CD14-positive monocyte (primary cell): ENCODE measurements at regions of chr10 and their contacts with region 1.

Region 1: DNA sequence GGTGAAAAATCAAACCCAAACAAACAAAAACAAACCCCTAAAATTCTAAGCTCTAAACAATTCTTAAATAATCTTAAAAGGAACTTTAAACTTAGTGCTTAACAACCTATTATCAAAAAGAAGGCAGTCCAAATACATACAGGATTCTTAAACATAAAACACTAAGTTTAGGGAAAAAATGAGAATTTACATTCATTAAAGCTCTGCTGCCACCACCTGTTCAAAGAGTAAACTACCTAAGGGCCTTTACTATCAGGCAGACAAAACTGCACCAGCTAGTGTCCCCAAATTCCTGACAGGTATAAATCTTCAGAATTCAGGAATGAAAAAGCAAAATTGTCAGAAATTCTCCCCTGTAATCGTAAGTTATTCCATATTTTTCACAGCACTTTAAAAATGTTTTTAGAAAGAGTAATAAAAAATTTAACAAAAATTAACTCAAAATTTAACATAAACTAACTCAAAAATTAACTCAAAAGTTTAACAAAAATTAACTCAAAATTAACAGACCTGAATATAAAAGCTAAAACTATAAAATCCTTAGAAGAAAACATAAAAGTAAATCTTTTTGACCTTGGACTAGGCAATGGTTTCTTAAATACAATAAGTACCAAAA is 55.1 kb downstream of the PDZD8 start:
- DNase-seq: peak in 2 of 3 donors; percentile 9 to 18
- H3K4me3 ChIP-seq: no peak overlapping the region
- H3K4me3 Mint-ChIP-seq: no peak overlapping the region
- H3K27ac ChIP-seq: no peak overlapping the region
- H3K27ac Mint-ChIP-seq: no peak overlapping the region
- H3K4me1 ChIP-seq: no peaks in the 10 kb centered on the region
- H3K4me1 Mint-ChIP-seq: peaks cover 3% of the 10 kb centered on the region
- H3K27me3 ChIP-seq: no peaks in the 10 kb centered on the region
- H3K27me3 Mint-ChIP-seq: no peaks in the 10 kb centered on the region
- CTCF ChIP-seq: peak; percentile 70

Region 2: DNA sequence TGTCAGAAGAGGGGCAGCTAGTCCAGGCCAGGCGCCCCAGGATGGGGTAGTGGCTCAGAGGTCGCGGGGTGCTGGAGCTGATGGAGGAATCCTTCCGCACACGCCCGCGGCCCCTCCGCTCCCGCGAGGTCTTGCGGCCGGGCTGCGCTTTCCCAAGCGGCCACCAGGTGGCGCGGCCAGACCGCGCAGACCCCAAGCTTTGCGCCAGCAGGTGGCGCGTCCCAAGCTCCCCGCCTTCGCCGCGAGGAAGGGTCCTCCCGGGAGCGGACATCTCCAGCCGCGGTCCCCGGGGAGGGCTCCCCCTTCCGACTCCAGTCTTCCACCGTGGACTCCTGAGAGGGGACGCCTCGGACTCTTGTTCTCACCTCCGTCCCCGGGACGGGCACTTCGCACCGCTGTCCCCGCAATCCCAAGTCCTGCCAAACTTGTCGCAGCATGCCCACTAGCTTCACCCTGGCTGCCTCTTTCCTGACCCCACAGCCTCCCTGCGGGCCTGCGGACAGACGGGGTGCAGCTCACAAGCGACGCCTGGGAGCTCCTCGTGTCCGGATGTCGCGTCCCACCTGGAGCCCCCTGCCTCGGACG is 103.5 kb before region 1 on chr10:
- intact Hi-C with region 1: loop called (anchors 5 to 10 kb)
- DNase-seq: peak; percentile 54 to 71 (median 63)
- H3K4me3 ChIP-seq: peak overlapping the region; percentile 32 to 74 (median 50)
- H3K4me3 Mint-ChIP-seq: peak overlapping the region; percentile 78 to 91
- H3K27ac ChIP-seq: no peak overlapping the region
- H3K27ac Mint-ChIP-seq: peak overlapping the region in 2 of 7 donors; percentile 6 to 52
- H3K4me1 ChIP-seq: peaks cover 12 to 14% of the 10 kb centered on the region in 2 donors
- H3K4me1 Mint-ChIP-seq: peaks cover 15% of the 10 kb centered on the region
- H3K27me3 ChIP-seq: peaks cover 0 to 43% of the 10 kb centered on the region in 2 donors
- H3K27me3 Mint-ChIP-seq: peaks cover 37 to 74% (median 59%) of the 10 kb centered on the region in 3 donors
- CTCF ChIP-seq: peak; percentile 100

Region 3: DNA sequence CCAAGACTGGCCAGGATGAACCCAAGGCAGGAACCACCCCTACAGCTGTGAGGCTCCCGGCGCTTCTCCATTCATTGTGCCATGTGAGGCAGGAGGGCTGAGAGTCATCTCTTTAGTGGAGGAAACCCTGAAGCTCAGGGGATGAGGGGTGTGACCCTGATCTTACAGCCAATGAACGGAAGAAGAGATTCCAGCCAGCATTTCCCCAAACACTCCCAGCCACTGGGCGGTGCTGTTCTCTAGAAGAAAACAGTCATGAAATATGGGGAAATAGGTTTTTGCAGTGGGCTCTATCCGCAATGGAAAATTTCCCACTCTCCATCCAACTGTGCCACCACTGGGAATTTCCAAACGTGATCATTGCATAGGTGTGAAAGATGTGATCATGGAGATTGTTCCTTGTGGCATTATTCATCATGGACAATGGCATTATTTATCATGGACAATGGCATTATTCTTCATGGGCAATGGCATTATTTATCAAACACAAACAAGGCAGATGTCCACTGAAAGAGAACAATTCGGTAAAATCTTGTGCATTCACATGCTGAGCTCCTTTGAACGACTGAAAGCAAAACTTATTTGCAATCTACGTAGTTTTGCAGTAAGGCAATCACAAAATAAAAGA is 93.2 kb before region 1 on chr10:
- intact Hi-C with region 1: loop called in 1 of 2 experiments (anchors 10 kb)
- DNase-seq: peak; percentile 32 to 65 (median 57)
- H3K4me3 ChIP-seq: no peak overlapping the region
- H3K4me3 Mint-ChIP-seq: no peak overlapping the region
- H3K27ac ChIP-seq: no peak overlapping the region
- H3K27ac Mint-ChIP-seq: no peak overlapping the region
- H3K4me1 ChIP-seq: no peaks in the 10 kb centered on the region
- H3K4me1 Mint-ChIP-seq: peaks cover 2% of the 10 kb centered on the region
- H3K27me3 ChIP-seq: no peaks in the 10 kb centered on the region
- H3K27me3 Mint-ChIP-seq: peaks cover 9 to 13% (median 12%) of the 10 kb centered on the region in 3 donors
- CTCF ChIP-seq: peak; percentile 74